Ovary (tissue), 10 donors: ENCODE measurements at regions of chr7 and their contacts with region 1.

Region 1: DNA sequence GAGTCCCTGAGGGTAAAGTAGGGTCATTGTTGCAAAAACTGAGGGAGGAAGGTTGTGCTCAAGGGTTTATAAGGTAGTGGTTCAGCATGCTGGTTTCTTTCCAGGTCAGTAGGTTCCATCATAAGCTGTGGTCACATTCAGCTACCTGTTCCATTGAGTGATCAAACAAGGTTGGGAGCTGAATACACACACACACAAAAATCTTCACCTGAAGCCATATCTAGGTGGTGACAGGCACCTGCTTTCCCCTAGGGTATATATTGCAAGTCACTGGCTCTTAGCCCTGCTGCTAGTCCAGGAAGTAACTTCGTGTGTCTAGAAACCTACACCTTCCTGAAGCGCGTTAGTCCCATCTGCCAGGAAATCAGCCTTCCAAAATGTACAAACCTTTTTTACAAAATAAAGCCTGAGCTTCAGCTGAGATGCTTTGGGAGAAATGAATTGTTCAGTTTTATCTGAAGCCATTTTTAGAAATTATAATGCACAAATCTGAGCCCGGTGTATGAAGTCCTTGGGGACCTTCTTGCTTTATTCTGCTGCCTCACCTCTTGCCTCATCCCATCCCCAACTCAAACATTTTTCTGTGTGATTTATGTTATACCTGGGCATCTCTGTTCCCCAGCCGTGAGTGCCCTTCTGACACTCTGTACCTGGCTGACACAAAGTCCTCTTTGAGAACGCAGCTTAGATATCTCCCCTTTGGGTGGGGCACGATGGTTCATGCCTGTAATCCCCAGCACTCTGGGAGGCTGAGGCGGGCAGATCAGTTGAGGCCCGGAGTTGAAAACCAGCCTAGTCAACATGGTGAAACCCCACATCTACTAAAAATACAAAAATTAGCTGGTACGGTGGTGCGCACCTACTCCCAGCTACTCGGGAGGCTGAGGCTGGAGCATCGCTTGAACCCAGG is 10.6 kb upstream of the LAMTOR4 start:
- DNase-seq: no peak
- H3K4me3 ChIP-seq: no peak overlapping the region
- H3K27ac ChIP-seq: no peak overlapping the region
- H3K4me1 ChIP-seq: no peaks in the 10 kb centered on the region
- H3K27me3 ChIP-seq: no peaks in the 10 kb centered on the region
- CTCF ChIP-seq: no peak
- EP300 ChIP-seq: no peak
- POLR2A ChIP-seq: no peak

Region 2: DNA sequence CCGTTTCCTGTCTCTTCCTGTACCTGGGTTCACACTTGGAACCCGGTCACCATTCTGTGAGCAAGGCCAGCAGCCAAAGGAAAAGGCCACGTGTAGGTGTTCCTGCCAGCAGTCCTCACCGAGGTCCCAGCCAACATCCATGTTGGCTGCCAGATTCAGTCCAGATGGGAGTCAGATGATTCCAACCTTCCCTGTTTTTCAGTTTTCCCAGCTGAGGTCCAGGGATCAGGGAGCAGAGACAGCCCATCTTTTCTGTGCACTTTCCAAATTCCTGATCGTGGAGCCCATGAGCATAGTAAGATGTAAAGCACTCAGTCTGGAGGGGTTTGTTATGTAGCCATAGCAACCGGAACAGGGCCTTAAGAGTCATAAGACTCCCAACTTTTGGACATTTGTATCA is 77.8 kb after region 1 on chr7:
- intact Hi-C with region 1: loop called (anchors 5 to 10 kb)
- DNase-seq: peak; percentile 43 to 60 (median 49)
- H3K4me3 ChIP-seq: no peak overlapping the region
- H3K27ac ChIP-seq: peak overlapping the region in 1 of 2 donors; percentile 21
- H3K4me1 ChIP-seq: peaks cover 2% of the 10 kb centered on the region
- H3K27me3 ChIP-seq: no peaks in the 10 kb centered on the region
- CTCF ChIP-seq: no peak
- EP300 ChIP-seq: no peak
- POLR2A ChIP-seq: no peak